Head of caudate nucleus (tissue), 42 donors: ENCODE measurements at regions of chr21 and their contacts with region 1.

Region 1: GRCh38 chr21:37267269-37268184 is at the start of gene VPS26C:
- DNase-seq: peak; percentile 96 to 99 (median 98)

Region 2: DNA sequence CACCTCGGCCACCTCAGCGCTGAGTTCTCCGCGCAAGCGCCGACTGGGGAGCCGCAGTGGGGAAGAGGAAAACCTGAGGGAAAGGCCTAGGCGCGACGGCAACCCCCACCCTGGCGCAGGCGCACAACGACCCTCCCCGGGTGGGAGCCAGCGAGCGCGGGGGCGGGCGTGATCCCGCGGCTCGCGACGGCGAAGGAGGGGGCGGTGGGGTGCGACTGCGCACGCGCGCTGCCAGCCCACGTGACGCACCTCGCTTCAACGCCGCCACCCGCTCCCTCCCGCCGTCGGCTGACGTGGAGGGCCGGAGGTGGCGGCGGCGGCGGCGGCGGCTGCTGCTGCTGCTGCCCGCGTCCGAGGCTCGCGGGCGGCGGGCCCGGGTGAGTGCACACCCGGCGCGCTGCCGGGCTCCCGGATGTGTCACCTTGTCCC is 194.5 kb before region 1 on chr21 and contains the starts of genes PIGP and TTC3:
- intact Hi-C with region 1: loop called (anchors 2 kb)
- DNase-seq: peak; percentile 86 to 98 (median 96)

Region 3: DNA sequence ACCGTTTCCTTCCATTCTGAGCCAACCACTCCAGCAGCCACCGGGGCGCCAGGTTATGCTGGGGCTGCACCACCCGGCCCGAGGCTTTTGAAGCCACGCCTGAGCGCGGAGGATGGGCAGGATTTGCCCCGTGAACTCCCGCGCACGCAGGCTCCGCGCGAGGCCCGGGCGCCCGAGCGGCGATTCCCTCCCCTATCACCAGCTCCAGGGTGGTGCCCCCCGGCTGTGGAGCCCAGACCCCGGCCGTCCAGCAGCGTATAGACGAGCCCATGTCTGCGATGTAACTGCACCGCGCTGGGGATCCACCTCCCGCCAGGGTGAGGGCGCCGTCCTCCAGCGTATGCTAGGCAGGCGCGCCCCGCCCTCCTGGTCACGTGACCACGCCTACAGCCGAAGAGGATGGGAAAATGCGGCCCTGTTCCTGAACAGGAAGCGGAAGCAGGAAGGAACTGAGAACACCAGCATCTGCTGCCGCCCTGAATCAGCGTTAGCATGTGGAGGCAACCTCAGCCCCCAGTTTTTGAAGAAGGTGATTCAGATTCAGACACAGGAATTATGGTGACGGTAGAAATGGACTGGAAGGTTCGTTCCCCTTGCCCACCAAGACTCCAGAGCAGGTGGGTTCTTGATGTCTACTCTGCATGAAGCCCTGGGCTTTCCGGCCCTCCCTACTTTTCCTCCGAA is 46.4 kb before region 1 on chr21:
- intact Hi-C with region 1: loop called (anchors 2 kb)
- DNase-seq: peak; percentile 93 to 99 (median 97)

Region 4: DNA sequence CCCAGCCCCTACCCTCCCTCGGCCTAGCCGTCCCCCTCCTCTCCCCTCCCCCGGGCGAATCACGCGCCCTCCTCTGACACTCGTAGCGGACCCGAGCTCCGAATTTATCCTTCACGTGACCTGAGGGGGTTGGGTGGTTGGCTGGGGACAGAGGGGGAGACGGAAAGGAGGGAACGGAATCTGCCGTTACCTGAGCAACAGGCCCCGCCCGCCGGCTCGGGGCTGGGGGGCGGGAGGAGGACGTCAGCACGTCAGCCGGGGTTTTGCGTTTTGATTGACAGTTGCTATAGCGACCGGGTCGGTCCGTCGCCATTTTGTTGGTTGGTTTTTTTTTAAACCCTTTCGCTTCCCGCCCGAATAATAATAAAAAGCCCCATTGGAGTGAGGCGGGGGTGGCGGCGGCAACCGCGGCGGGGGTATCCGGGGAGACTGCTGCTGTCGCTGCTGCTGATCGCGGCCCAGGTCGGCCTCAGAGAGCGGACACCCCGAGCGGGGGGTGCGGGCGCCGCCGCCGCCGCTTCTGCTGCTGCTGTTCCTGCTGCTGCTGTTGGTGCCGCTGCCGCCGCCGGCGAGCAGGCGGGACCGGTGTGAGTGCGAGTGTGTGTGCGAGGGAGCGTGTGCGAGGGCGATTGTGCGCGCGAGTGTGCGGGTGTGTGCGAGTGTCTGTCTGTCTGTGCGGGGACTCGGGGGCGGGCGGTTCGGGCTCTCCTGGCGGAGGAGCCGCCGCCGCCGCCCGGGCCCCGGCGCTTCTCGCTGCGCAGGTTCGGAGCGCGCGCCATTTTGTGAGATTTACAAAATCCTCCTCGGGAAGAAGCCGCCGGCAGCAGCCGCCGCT is 99.2 kb after region 1 on chr21 and contains the start of gene DYRK1A:
- intact Hi-C with region 1: loop called (anchors 1 kb)
- DNase-seq: peak; percentile 97 to 100 (median 99)

Region 5: DNA sequence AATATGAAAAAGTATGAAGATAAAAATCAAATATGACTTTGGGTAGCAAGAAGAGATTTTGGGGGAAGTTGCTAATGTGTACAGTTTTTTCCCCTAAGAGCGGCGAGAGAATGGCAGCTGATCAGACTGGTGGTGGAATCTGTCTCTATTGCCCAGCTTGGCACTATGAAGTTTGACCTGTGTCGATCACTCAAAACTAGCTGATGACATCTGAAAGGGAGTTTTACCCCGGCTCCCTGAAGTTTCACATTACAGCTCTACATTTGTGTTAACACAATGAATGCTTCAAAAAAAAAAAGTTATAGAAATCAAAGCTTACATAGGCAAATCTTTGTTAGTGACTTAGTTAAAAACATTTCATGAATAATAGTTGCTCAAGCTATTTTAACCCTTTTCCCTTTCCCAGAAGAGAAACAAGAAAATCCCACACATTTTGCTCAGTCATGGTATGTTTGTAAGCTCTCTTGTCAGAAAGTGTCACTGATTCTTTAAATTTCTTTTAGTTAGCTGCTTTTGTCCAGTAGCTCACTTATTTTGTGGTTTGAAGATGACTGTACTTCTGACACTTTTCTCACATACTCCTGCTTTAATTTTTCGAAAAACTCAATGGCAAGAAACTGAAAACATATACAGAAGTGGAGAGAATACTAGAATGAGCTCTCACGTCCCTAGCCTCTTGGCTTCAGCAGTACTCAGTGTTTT is 140.3 kb after region 1 on chr21:
- intact Hi-C with region 1: no loop called
- DNase-seq: no peak

Region 6: DNA sequence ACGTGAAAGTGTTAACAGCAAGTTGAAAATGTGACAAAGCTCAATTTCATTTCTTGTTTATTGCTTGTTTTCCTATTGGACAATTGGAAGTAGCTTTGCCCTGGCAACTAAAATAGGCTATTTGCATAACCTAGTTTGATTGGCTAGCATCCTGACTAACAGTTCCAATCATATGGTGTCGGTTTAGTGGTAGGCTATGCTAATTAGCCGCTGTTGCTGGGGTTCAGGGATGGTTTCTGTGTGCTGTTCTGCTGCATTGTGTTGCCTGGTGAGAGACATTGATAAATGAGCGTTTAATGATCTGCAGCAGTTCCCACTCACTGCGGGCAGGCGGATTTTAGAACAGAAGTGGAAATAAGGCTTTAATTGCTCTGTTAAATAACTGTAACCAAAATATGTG is 167.6 kb after region 1 on chr21:
- intact Hi-C with region 1: loop called (anchors 10 kb)
- DNase-seq: peak in 41 of 42 donors; percentile 26 to 88 (median 64)

Region 7: DNA sequence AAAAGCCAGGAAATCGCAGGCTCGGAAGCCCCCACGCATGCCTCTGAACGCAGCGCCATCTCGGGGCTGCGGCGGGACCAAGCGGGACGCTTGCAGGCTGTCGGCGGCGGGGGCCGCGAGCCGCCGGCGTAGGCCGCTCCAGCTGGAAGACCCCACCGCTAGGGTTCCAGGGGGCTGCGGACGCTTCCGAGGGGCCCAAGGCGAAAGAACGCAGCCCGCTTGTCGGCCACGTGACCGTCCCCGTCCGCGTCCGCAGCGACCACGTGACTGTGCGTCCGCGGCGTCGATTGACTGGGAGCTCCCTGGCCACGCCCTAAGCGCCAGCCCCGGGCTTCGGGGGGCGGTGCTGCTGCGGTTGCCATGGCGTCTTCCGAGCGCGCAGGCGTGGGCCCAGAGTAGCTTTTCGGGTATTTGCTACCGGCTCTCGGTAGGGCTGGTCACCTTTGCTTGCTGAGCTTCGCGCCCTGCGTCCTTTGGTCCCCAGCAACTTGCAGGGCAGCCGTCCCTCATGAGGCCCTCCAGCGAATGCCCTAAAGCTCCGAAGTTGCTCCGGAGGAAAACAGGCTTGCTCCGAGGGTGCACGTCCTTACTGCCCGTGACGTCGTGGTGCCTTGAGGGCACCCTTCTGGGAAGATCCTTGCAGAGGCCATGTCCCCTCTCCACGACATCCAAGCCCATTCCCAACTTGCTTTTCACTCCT is 296.3 kb after region 1 on chr21:
- intact Hi-C with region 1: loop called (anchors 5 kb)
- DNase-seq: peak; percentile 88 to 98 (median 95)